ENCODE measurements at regions of chr6 and their contacts with region 1.

Region 1: GRCh38 chr6:41941280-41942066 is at the start of gene CCND3:
- DNase-seq: peak; percentile 96 to 98
- ATAC-seq: peak; percentile 94
- H3K4me3 ChIP-seq: peak within 1 kb of the TSS; percentile 80 to 81
- H3K27ac ChIP-seq: peak within 1 kb of the TSS in 1 of 2 donors; percentile 90
- H3K4me1 ChIP-seq: no peaks in the 10 kb centered on the region
- H3K27me3 ChIP-seq: no peaks in the 10 kb centered on the region
- total RNA-seq, gene CCND3: 47.8 to 51.4 TPM

Region 2: GRCh38 chr6:41818271-41819054 is 123.0 kb before region 1 on chr6:
- intact Hi-C with region 1: no loop called
- DNase-seq: no peak
- ATAC-seq: no peak
- H3K4me3 ChIP-seq: no peak overlapping the region
- H3K27ac ChIP-seq: no peak overlapping the region
- H3K4me1 ChIP-seq: no peaks in the 10 kb centered on the region
- H3K27me3 ChIP-seq: no peaks in the 10 kb centered on the region

Region 3: GRCh38 chr6:41920921-41921711 is 20.4 kb before region 1 on chr6 and contains the starts of genes BYSL and MED20:
- intact Hi-C with region 1: loop called in 1 of 2 experiments (anchors 1 kb)
- DNase-seq: peak; percentile 96 to 97
- ATAC-seq: peak; percentile 98
- H3K4me3 ChIP-seq: peak within 1 kb of the TSS; percentile 52 to 90
- H3K27ac ChIP-seq: peak within 1 kb of the TSS; percentile 17 to 89
- H3K4me1 ChIP-seq: peaks cover 0 to 7% of the 10 kb centered on the region in 2 donors
- H3K27me3 ChIP-seq: no peaks in the 10 kb centered on the region
- total RNA-seq, gene BYSL: 9.7 to 12.0 TPM
- total RNA-seq, gene MED20: 11.7 to 16.1 TPM

Region 4: GRCh38 chr6:42050266-42051032 is 109.0 kb after region 1 on chr6 and contains the start of gene TAF8:
- intact Hi-C with region 1: loop called in 1 of 2 experiments (anchors 2 kb)
- DNase-seq: peak; percentile 95 to 97
- ATAC-seq: peak; percentile 95
- H3K4me3 ChIP-seq: peak within 1 kb of the TSS; percentile 39 to 77
- H3K27ac ChIP-seq: peak within 1 kb of the TSS in 1 of 2 donors; percentile 39
- H3K4me1 ChIP-seq: peaks cover 0 to 2% of the 10 kb centered on the region in 2 donors
- H3K27me3 ChIP-seq: no peaks in the 10 kb centered on the region
- total RNA-seq, gene TAF8: 24.2 to 28.6 TPM

Measured in aorta (tissue), 5 donors.